ENCODE measurements at regions of chr17 and their contacts with region 1.

Region 1: GRCh38 chr17:59155439-59156182 is at the start of gene PRR11:
- DNase-seq: peak; percentile 94
- H3K4me3 Mint-ChIP-seq: no peak within 1 kb of the TSS
- H3K27ac Mint-ChIP-seq: no peak within 1 kb of the TSS
- H3K4me1 Mint-ChIP-seq: peaks cover 63% of the 10 kb centered on the region
- H3K27me3 Mint-ChIP-seq: no peaks in the 10 kb centered on the region
- total RNA-seq, gene PRR11: 29.4 and 32.7 TPM in 2 replicates

Region 2: DNA sequence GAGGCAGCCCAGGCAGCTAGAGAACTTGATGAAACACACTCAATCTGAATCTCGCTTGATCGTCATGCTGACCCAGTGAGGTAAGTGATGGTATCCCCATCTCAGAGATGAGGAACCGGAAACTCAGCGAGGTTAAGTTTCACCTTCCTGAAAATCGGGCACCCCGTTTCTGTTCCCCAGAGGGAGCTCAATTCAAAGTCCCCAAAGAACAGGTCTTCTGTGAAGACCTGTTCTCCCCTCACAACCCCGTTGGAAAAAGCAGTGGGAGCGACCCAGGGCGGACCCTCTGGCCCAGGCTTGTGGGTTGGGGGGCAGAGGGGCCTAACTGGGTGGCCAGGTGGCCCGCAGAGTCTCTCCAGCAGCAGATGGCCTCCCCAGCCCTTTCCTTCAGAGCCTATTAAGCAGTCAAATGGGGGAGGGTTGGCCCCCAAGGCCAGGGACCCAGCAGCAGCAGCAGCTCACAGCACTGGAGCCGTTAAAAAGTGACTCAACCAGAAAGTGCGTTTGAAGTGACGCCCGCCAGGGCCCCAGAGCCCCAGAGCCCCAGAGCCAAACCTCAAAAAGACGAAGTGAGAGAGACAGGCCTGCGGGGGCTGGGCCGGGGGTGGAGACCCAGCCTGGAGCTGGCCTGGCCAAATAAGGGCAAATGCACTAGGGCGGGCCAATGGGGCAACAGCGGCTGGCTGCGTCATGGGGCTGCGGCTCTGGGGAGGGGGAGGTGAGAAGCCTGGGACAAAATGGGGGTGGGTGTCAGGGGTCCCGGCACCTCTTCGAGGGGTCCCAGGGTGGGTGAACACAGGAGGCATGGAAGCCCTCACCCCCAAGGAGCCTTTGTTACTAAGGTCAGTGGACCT is 817.8 kb before region 1 on chr17:
- intact Hi-C with region 1: loop called (anchors 2 kb)
- DNase-seq: peak; percentile 92
- H3K4me3 Mint-ChIP-seq: peak overlapping the region; percentile 100
- H3K27ac Mint-ChIP-seq: peak overlapping the region; percentile 99
- H3K4me1 Mint-ChIP-seq: peaks cover 61% of the 10 kb centered on the region
- H3K27me3 Mint-ChIP-seq: peaks cover 2% of the 10 kb centered on the region

Region 3: GRCh38 chr17:58960068-58960467 is 195.5 kb before region 1 on chr17:
- intact Hi-C with region 1: no loop called
- DNase-seq: no peak
- H3K4me3 Mint-ChIP-seq: no peak overlapping the region
- H3K27ac Mint-ChIP-seq: no peak overlapping the region
- H3K4me1 Mint-ChIP-seq: no peaks in the 10 kb centered on the region
- H3K27me3 Mint-ChIP-seq: no peaks in the 10 kb centered on the region

Region 4: GRCh38 chr17:59038734-59039133 is 116.9 kb before region 1 on chr17:
- intact Hi-C with region 1: no loop called
- DNase-seq: no peak
- H3K4me3 Mint-ChIP-seq: peak overlapping the region; percentile 15
- H3K27ac Mint-ChIP-seq: peak overlapping the region; percentile 29
- H3K4me1 Mint-ChIP-seq: peaks cover 6% of the 10 kb centered on the region
- H3K27me3 Mint-ChIP-seq: no peaks in the 10 kb centered on the region

Region 5: DNA sequence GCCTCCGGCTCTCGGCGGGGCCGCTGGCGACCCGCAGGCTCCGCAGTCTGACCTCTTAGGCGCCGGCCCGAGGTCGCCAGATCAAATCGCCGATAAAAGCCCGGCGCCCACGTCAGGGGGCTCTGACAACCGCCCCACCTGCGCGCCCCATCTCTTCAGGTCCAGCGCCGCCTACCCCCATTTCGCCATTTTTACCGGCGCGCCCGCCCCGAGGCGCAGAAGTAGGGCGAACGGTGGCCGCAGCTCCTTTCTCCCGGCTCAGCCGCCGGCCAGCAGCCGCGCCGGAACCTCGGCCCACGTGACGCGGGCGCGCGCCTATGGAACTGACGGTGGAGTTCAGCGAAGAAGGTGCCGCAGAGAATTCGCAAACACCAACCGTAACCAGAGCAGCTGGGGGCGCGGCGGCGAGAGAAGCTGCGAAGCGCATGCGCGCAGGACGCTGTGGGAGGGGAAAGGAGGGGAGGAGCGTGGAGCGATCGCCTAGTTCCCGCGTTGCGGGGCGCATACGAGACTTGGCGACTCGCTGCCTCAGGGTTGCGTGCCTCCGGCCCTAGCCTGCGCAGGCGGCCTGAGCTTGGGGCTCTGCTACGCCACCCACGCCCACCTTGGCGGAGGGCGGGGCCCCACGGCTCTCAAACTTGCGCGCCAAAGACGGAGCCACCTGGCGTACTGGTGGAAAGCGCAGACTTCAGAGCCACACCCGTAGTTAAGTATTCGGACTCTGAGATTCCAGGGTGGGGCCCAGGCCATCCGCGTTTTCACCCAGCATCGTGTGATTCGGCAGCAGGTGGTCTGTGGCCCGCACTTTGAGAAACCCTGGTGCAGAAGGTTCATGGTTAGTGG is 48.9 kb before region 1 on chr17 and contains the start of gene TRIM37:
- intact Hi-C with region 1: loop called (anchors 1 kb)
- DNase-seq: peak; percentile 100
- H3K4me3 Mint-ChIP-seq: peak within 1 kb of the TSS; percentile 97
- H3K27ac Mint-ChIP-seq: peak within 1 kb of the TSS; percentile 90
- H3K4me1 Mint-ChIP-seq: peaks cover 66% of the 10 kb centered on the region
- H3K27me3 Mint-ChIP-seq: peaks cover 1% of the 10 kb centered on the region
- total RNA-seq, gene TRIM37: 27.5 and 27.7 TPM in 2 replicates

Region 6: DNA sequence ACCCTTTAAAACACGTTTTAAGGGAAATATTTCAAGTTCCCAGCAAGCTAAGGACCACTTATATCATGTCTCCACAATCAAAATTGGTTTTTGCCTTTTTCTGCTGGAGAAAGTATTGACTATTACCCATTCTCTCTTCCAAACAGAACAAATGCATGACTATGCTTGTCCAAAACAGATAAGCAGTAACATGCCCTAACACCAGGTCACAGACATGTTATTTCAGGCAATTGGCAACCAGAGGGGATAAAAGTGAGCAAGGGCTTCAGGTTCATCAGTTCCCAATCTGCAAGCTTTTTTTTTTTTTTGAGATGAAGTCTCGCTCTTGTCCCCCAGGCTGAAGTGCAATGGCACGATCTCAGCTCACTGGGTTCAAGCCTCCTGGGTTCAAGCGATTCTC is 15.7 kb before region 1 on chr17:
- intact Hi-C with region 1: no loop called
- DNase-seq: no peak
- H3K4me3 Mint-ChIP-seq: no peak overlapping the region
- H3K27ac Mint-ChIP-seq: no peak overlapping the region
- H3K4me1 Mint-ChIP-seq: peaks cover 6% of the 10 kb centered on the region
- H3K27me3 Mint-ChIP-seq: no peaks in the 10 kb centered on the region

Region 7: GRCh38 chr17:59220376-59221158 is 65.0 kb after region 1 on chr17 and contains the start of gene GDPD1:
- intact Hi-C with region 1: loop called (anchors 1 kb)
- DNase-seq: peak; percentile 97
- H3K4me3 Mint-ChIP-seq: peak within 1 kb of the TSS; percentile 95
- H3K27ac Mint-ChIP-seq: peak within 1 kb of the TSS; percentile 93
- H3K4me1 Mint-ChIP-seq: peaks cover 14% of the 10 kb centered on the region
- H3K27me3 Mint-ChIP-seq: peaks cover 6% of the 10 kb centered on the region
- total RNA-seq, gene GDPD1: 2.7 and 3.2 TPM in 2 replicates

Region 8: GRCh38 chr17:59892924-59893676 is 737.5 kb after region 1 on chr17 and contains the starts of genes RPS6KB1 and TUBD1:
- intact Hi-C with region 1: loop called (anchors 2 kb)
- DNase-seq: peak; percentile 98
- H3K4me3 Mint-ChIP-seq: peak within 1 kb of the TSS; percentile 100
- H3K27ac Mint-ChIP-seq: peak within 1 kb of the TSS; percentile 99
- H3K4me1 Mint-ChIP-seq: peaks cover 58% of the 10 kb centered on the region
- H3K27me3 Mint-ChIP-seq: peaks cover 3% of the 10 kb centered on the region
- total RNA-seq, gene RPS6KB1: 67.6 and 82.7 TPM in 2 replicates
- total RNA-seq, gene TUBD1: 12.3 and 13.2 TPM in 2 replicates